ENCODE measurements at regions of chr4 and their contacts with region 1.

Region 1: GRCh38 chr4:25767877-25768725 is 94.7 kb downstream of the SEL1L3 start:
- DNase-seq: peak; percentile 62
- ATAC-seq: peak; percentile 91
- H3K4me3 ChIP-seq: no peak overlapping the region
- H3K27ac ChIP-seq: no peak overlapping the region
- H3K4me1 ChIP-seq: no peaks in the 10 kb centered on the region
- H3K27me3 ChIP-seq: no peaks in the 10 kb centered on the region
- CTCF ChIP-seq: peak; percentile 87
- EP300 ChIP-seq: no peak
- POLR2A ChIP-seq: no peak
- RAD21 ChIP-seq: peak; percentile 74; the same call in 1 of the 2 replicates

Region 2: DNA sequence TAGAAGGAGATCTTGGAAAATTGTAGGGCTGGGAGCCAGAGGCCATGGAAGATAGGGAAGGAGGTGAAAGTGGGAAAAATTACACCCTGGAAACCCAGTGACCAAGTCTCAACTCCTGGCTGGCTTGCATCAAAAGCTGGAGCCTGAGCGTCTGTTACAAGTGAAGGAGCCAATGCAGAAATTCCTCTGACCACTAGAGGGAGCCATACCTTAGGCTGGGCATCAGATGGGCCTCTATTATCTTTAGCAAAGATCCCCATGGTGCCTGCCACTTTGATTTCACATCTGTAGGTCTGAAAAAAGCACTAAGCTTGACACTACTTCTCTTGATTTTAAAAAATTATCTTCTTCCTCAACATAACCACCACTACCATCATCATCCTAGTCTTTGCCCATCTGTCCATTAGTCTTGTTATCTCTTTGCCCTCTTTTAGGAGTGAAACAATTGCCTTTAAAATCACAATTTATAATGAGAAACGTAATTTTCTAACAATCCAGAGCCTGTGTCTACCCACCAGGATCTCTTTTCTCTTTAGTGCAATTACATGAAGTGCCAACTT is 328.1 kb before region 1 on chr4:
- CTCF ChIA-PET with region 1: interaction called, 54 read pairs
- POLR2A ChIA-PET with region 1: no interaction called
- in situ Hi-C with region 1: loop called (anchors 5 kb)
- intact Hi-C with region 1: loop called (anchors 1 kb)
- DNase-seq: peak; percentile 43
- ATAC-seq: peak; percentile 89
- H3K4me3 ChIP-seq: no peak overlapping the region
- H3K27ac ChIP-seq: no peak overlapping the region
- H3K4me1 ChIP-seq: no peaks in the 10 kb centered on the region
- H3K27me3 ChIP-seq: no peaks in the 10 kb centered on the region
- CTCF ChIP-seq: peak; percentile 81
- EP300 ChIP-seq: no peak
- POLR2A ChIP-seq: no peak
- RAD21 ChIP-seq: no peak; the same call in 1 of the 2 replicates

Region 3: DNA sequence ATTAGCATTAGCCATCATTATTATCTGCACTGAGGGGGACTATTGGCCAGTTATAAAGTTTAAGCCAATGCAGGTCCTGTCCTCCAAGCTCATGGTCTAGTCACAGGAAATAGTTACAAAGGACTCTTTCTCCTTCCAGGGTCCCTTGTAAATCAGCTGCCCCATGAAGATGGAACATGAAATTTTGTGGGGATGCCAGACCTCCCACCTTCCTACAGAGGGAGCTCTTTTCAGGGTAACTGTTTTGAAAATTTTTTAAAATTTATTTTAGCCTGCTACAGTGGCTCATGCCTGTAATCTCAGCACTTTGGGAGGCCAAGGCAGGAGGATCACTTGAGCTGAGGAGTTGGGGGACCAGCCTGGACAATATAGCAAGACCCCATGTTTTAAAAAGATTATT is 236.8 kb before region 1 on chr4:
- CTCF ChIA-PET with region 1: no interaction called
- POLR2A ChIA-PET with region 1: no interaction called
- in situ Hi-C with region 1: loop called (anchors 25 kb)
- intact Hi-C with region 1: loop called (anchors 2 kb)
- DNase-seq: no peak
- ATAC-seq: no peak
- H3K4me3 ChIP-seq: no peak overlapping the region
- H3K27ac ChIP-seq: no peak overlapping the region
- H3K4me1 ChIP-seq: peaks cover 22% of the 10 kb centered on the region
- H3K27me3 ChIP-seq: no peaks in the 10 kb centered on the region
- CTCF ChIP-seq: peak; percentile 12; the same call in 1 of the 2 replicates
- EP300 ChIP-seq: no peak
- POLR2A ChIP-seq: no peak
- RAD21 ChIP-seq: no peak

Region 4: DNA sequence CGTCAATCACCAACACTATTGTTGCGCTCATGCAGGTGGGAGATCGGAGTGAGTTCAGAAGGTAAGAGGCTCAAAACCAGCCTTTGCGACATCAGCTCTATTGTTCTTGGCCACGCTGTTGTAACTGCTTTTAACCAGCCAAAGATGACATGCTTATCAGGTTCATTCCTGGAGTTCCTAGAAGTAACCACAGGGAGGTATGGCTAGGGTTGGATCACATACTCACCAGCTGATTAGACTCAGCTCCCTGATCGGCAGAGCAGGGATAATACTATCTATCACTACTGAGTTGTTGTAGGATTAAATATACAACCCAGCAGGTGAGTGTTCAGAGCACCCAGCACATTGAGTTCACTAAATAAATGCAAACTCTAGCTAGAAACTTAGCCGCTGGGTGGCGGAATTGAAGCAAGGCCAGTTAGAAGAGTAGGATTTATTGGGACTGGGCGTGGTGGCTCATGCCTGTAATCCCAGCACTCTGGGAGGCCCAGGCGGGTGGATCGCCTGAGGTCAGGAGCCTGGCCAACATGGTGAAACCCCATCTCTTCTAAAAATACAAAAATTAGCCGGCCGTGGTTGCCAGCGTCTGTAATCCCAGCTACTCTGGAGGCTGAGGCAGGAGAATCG is 100.1 kb before region 1 on chr4:
- CTCF ChIA-PET with region 1: no interaction called
- POLR2A ChIA-PET with region 1: no interaction called
- in situ Hi-C with region 1: no loop called
- intact Hi-C with region 1: loop called (anchors 2 kb)
- DNase-seq: peak; percentile 34
- ATAC-seq: peak; percentile 70
- H3K4me3 ChIP-seq: no peak overlapping the region
- H3K27ac ChIP-seq: no peak overlapping the region
- H3K4me1 ChIP-seq: no peaks in the 10 kb centered on the region
- H3K27me3 ChIP-seq: peaks cover 0 to 12% of the 10 kb centered on the region in 2 experiments; a peak in 1 of 5 replicates
- CTCF ChIP-seq: peak; percentile 19; the same call in 1 of the 2 replicates
- EP300 ChIP-seq: no peak
- POLR2A ChIP-seq: no peak
- RAD21 ChIP-seq: no peak

Measured in HepG2 (cell line).